ENCODE measurements at regions of chr11 and their contacts with region 1.

Region 1: GRCh38 chr11:65833297-65834030 is at the start of gene SNX32:
- DNase-seq: peak; percentile 98
- ATAC-seq: peak; percentile 99
- H3K4me3 Mint-ChIP-seq: no peak within 1 kb of the TSS
- H3K27ac Mint-ChIP-seq: no peak within 1 kb of the TSS
- H3K4me1 Mint-ChIP-seq: peaks cover 22% of the 10 kb centered on the region
- H3K27me3 Mint-ChIP-seq: no peaks in the 10 kb centered on the region
- total RNA-seq, gene SNX32: 2.9 to 3.0 TPM

Region 2: GRCh38 chr11:65802841-65803240 is 30.6 kb before region 1 on chr11:
- CTCF ChIA-PET with region 1: no interaction called
- POLR2A ChIA-PET with region 1: no interaction called
- intact Hi-C with region 1: no loop called
- DNase-seq: no peak
- ATAC-seq: no peak
- H3K4me3 Mint-ChIP-seq: no peak overlapping the region
- H3K27ac Mint-ChIP-seq: no peak overlapping the region
- H3K4me1 Mint-ChIP-seq: no peaks in the 10 kb centered on the region
- H3K27me3 Mint-ChIP-seq: peaks cover 19% of the 10 kb centered on the region

Region 3: DNA sequence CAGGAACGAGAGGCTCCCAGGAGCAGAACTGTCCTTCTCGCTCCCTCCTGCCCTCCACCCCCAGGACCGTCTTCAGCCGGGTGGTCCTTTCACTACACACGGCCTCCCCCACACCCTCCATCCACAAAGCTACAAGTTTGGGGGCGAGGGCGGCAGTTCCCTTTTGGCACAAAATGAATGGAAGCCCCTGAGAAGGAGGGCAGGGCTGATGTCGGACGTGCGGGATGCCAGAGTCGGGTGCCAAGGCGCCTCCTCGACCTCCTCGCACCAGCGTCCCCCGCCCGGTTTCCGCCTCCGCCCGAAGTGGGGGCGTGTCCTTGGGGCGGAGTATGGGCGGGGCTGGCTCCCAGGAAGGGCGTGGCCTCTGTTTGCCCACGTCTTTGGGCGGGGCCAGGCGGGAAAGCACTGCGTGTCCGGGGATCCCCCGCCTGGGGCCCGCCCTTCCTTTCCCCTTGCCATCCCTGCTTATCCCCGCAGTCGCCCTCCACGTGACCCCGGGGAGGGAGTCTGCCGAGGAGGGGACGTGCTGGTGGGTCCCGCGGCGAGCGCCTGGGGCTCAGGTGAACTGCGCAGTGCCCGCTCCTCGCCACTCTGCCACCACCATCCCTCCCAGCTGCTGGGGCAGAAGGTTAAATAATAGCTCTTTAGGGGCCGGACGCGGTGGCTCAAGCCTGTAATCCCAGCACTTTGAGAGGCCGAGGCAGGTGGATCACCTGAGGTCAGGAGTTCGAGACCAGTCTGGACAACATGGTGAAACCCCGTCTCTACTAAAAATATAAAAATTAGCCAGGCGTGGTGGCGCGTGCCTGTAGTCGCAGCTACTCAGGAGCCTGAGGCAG is 40.1 kb after region 1 on chr11:
- CTCF ChIA-PET with region 1: interaction called, 3 read pairs
- POLR2A ChIA-PET with region 1: no interaction called
- intact Hi-C with region 1: loop called in 1 of 2 experiments (anchors 1 kb)
- DNase-seq: peak; percentile 97
- ATAC-seq: peak; percentile 93
- H3K4me3 Mint-ChIP-seq: peak overlapping the region; percentile 84
- H3K27ac Mint-ChIP-seq: peak overlapping the region; percentile 91
- H3K4me1 Mint-ChIP-seq: peaks cover 15% of the 10 kb centered on the region
- H3K27me3 Mint-ChIP-seq: no peaks in the 10 kb centered on the region

Region 4: GRCh38 chr11:65988791-65989592 is 155.5 kb after region 1 on chr11:
- CTCF ChIA-PET with region 1: no interaction called
- POLR2A ChIA-PET with region 1: no interaction called
- intact Hi-C with region 1: loop called in 1 of 2 experiments (anchors 1 kb)
- DNase-seq: peak; percentile 95
- ATAC-seq: peak; percentile 99
- H3K4me3 Mint-ChIP-seq: no peak overlapping the region
- H3K27ac Mint-ChIP-seq: peak overlapping the region; percentile 59
- H3K4me1 Mint-ChIP-seq: peaks cover 2% of the 10 kb centered on the region
- H3K27me3 Mint-ChIP-seq: no peaks in the 10 kb centered on the region